AG04450 (cell line): ENCODE measurements at regions of chr12 and their contacts with region 1.

Region 1: GRCh38 chr12:40911676-40912075 is 219.4 kb downstream of the CNTN1 start:
- DNase-seq: no peak
- H3K4me3 ChIP-seq: no peak overlapping the region
- H3K27ac ChIP-seq: no peak overlapping the region
- H3K27me3 ChIP-seq: no peaks in the 10 kb centered on the region
- CTCF ChIP-seq: no peak

Region 2: DNA sequence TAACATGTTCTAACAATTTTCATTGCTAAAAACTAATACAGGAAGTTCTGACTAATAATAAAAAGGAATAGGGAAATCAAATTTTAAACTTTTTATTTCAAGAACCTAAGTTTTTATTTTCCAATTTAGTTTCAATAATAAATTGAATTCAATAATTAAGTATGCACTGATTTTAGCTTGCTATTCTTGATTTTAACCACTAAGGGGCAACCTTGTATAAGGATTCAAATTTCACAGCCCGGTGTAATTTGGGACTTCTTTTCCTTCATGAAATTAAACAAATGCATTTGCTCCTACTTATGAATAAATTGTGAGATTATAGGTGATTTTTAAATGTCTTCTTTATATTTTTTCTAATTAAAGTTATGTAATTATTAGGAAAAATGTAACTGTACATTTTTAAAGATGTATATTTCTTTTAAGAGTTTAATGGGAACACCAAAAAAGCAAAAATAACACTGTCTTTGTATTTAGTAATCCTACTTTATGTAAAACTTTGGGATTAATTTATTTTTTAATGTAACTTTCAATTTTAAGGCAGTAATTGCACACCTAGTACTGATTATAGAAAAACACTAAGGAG is 35.0 kb after region 1 on chr12:
- CTCF ChIA-PET with region 1: interaction called, 10 read pairs
- POLR2A ChIA-PET with region 1: no interaction called
- DNase-seq: no peak
- H3K4me3 ChIP-seq: no peak overlapping the region
- H3K27ac ChIP-seq: no peak overlapping the region
- H3K27me3 ChIP-seq: no peaks in the 10 kb centered on the region
- CTCF ChIP-seq: peak; percentile 60

Region 3: GRCh38 chr12:41120211-41120610 is 208.5 kb after region 1 on chr12:
- CTCF ChIA-PET with region 1: no interaction called
- POLR2A ChIA-PET with region 1: no interaction called
- DNase-seq: no peak
- H3K4me3 ChIP-seq: no peak overlapping the region
- H3K27ac ChIP-seq: no peak overlapping the region
- H3K27me3 ChIP-seq: no peaks in the 10 kb centered on the region
- CTCF ChIP-seq: no peak